Tibial artery (tissue), 4 donors: ENCODE measurements at regions of chr12 and their contacts with region 1.

Region 1: GRCh38 chr12:59595883-59596540 is at the start of gene SLC16A7:
- DNase-seq: peak; percentile 91 to 96
- H3K4me3 ChIP-seq: peak within 1 kb of the TSS; percentile 80 to 93
- H3K27ac ChIP-seq: peak within 1 kb of the TSS; percentile 100
- H3K4me1 ChIP-seq: peaks cover 0 to 38% (median 18%) of the 10 kb centered on the region in 4 donors
- H3K27me3 ChIP-seq: no peaks in the 10 kb centered on the region
- CTCF ChIP-seq: no peak

Region 2: DNA sequence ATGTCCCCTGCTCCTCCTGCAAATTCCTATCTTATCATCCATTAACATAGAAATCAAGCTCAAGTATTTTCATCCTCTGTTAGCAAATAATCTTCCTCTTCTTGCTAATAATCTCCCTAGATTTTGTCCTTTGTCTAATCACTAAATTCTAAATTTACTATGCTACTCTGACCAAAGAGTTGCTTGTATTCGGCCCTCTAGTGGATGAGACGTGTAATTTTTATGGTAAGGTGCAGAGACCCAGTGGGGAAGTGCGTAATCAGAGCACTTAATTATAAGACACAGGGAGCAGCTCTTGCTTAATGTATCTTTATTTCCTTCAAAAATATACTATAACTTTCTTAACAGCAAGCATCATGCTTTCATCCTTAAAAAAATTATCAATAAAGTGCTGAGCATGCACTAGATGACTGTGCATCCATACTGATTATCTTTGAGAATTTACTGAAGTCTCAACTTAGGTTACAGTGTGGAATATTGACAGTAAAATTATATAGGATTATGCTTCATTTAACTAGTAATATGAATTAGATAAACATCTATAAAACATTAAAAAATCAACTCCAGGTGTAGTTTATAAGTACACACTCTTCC is 212.4 kb after region 1 on chr12:
- intact Hi-C with region 1: loop called (anchors 10 kb)
- DNase-seq: no peak
- H3K4me3 ChIP-seq: no peak overlapping the region
- H3K27ac ChIP-seq: no peak overlapping the region
- H3K4me1 ChIP-seq: peaks cover 0 to 6% (median 3%) of the 10 kb centered on the region in 4 donors
- H3K27me3 ChIP-seq: no peaks in the 10 kb centered on the region
- CTCF ChIP-seq: peak; percentile 64 to 70